CD8-positive, alpha-beta T cell (primary cell): ENCODE measurements at regions of chr16 and their contacts with region 1.

Region 1: DNA sequence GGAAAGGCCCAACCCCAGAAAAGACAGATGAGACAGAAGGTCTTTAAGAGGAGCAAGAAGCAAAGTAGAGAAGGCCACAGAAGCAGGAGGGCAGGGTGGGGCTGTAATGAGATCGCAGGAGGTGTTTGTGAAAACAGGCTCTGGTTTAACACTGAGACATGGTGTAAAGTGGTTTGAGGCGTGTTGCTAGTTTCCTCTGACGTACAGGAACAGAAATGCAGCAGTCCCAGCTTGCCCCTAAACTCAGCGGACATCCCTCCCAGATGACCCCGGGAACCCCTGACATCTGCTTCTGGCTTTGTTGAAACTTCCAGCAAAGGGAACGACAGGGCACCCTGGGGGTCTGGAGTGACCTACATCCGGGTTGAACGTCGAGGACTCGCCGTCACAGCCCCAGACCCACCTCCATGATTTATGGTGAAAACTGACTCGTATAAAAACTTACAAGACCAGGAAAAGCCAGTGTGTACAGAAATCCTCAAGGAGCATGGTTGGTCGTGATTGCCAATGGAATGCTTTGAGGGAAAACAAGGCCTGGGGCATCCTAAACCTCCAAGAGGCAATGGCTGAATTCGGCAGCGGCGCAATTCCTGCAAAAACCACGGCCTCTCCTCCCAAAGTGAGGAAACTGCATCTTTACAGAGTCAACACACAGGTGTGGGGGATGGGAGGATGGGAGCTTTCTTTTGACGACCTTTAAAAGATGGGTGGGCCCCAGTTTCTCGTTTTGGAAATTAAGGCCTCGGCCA is 25.8 kb downstream of the LITAF start:
- DNase-seq: peak; percentile 55 to 97 (median 76)
- ATAC-seq: peak; percentile 82
- H3K4me3 ChIP-seq: peak overlapping the region; percentile 42 to 56
- H3K4me3 Mint-ChIP-seq: peak overlapping the region; percentile 83
- H3K27ac ChIP-seq: peak overlapping the region; percentile 90 to 97
- H3K27ac Mint-ChIP-seq: peak overlapping the region; percentile 99
- H3K4me1 ChIP-seq: peaks cover 83% of the 10 kb centered on the region
- H3K4me1 Mint-ChIP-seq: peaks cover 84% of the 10 kb centered on the region
- H3K27me3 ChIP-seq: no peaks in the 10 kb centered on the region
- H3K27me3 Mint-ChIP-seq: no peaks in the 10 kb centered on the region
- CTCF ChIP-seq: no peak

Region 2: GRCh38 chr16:11515540-11516430 is 45.1 kb before region 1 on chr16:
- CTCF ChIA-PET with region 1: no interaction called
- POLR2A ChIA-PET with region 1: no interaction called
- intact Hi-C with region 1: no loop called
- DNase-seq: no peak
- ATAC-seq: no peak
- H3K4me3 ChIP-seq: no peak overlapping the region
- H3K4me3 Mint-ChIP-seq: no peak overlapping the region
- H3K27ac ChIP-seq: no peak overlapping the region
- H3K27ac Mint-ChIP-seq: no peak overlapping the region
- H3K4me1 ChIP-seq: no peaks in the 10 kb centered on the region
- H3K4me1 Mint-ChIP-seq: no peaks in the 10 kb centered on the region
- H3K27me3 ChIP-seq: no peaks in the 10 kb centered on the region
- H3K27me3 Mint-ChIP-seq: no peaks in the 10 kb centered on the region
- CTCF ChIP-seq: no peak

Region 3: DNA sequence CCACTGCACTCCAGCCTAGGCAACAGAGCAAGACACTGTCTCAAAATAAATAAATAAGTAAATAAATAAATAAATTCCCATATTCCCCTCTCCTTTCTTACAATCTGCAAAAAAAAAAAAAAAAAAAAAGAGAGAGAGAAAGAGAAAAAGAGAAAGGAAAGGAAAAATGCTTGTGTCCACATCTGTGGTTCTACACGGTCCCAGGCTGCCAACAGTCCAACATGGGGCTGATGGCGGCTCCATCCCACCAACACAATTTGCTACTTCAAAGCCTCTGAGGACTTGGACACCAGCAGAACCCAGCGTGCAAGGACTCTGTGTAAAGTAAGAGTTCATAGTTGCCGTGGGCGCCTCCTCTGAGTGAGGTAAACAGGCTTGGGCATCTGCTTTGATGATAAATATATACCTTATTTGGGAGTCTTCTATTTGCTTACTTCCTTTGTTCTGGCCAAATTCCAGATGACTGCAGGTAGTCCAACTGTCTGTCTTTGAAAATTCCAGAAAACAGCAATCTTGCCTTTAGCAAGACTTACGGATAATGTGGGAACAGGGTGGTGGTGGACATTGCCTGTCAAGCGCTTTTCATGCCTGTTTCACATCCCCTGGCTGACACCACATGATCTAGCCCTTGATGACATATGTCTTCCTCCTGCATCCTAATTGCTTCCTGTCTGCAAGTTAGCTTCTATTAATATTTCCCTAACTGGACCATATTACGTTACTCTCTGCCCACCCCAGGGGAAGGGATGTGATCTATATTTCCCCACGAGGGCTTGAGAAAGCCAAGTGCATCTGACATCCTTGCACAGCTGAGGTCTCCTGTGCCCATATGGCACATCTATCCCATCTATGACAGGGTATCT is 15.8 kb after region 1 on chr16:
- CTCF ChIA-PET with region 1: no interaction called
- POLR2A ChIA-PET with region 1: interaction called, 15 read pairs
- intact Hi-C with region 1: loop called in 1 of 2 experiments (anchors 1 kb)
- DNase-seq: peak in 1 of 9 experiments; percentile 62
- ATAC-seq: no peak
- H3K4me3 ChIP-seq: no peak overlapping the region
- H3K4me3 Mint-ChIP-seq: peak overlapping the region; percentile 47
- H3K27ac ChIP-seq: peak overlapping the region in 1 of 2 experiments; percentile 42
- H3K27ac Mint-ChIP-seq: peak overlapping the region; percentile 74
- H3K4me1 ChIP-seq: peaks cover 85% of the 10 kb centered on the region
- H3K4me1 Mint-ChIP-seq: peaks cover 80% of the 10 kb centered on the region
- H3K27me3 ChIP-seq: no peaks in the 10 kb centered on the region
- H3K27me3 Mint-ChIP-seq: no peaks in the 10 kb centered on the region
- CTCF ChIP-seq: no peak

Region 4: DNA sequence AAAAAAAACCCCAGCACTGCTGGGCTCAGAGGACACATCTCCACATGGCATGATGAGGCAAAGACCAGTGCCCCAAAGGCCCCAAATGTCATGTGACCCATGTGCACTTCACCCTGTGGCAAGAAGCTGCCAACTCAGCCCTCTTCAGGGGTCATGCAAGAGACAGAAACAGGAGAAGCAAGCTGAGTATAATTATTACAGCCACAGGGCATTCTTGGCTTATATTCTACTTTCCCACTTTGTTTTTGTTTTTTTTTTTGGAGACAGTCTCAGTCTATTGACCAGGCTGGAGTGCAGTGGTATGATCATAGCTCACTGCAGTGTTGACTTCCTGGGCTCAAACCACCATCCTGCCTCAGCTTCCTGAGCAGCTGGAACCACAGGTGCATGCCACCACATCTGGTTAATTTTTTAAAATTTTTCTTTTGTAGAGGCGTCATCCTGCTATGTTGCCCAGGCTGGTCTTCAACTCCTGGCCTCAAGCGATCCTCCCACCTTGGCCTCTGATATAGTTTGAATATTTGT is 58.5 kb after region 1 on chr16:
- CTCF ChIA-PET with region 1: interaction called, 6 read pairs
- POLR2A ChIA-PET with region 1: interaction called, 10 read pairs
- intact Hi-C with region 1: loop called in 1 of 2 experiments (anchors 2 kb)
- DNase-seq: peak in 7 of 9 experiments; percentile 28 to 75 (median 48)
- ATAC-seq: peak; percentile 25
- H3K4me3 ChIP-seq: no peak overlapping the region
- H3K4me3 Mint-ChIP-seq: peak overlapping the region; percentile 58
- H3K27ac ChIP-seq: peak overlapping the region; percentile 40 to 86
- H3K27ac Mint-ChIP-seq: peak overlapping the region; percentile 98
- H3K4me1 ChIP-seq: peaks cover 77% of the 10 kb centered on the region
- H3K4me1 Mint-ChIP-seq: peaks cover 70% of the 10 kb centered on the region
- H3K27me3 ChIP-seq: no peaks in the 10 kb centered on the region
- H3K27me3 Mint-ChIP-seq: no peaks in the 10 kb centered on the region
- CTCF ChIP-seq: no peak